ENCODE measurements at regions of chr4 and their contacts with region 1.

Region 1: GRCh38 chr4:118968005-118968404 is 79.4 kb downstream of the SYNPO2 start:
- DNase-seq: peak; percentile 21
- ATAC-seq: peak; percentile 93
- H3K4me3 Mint-ChIP-seq: no peak overlapping the region
- H3K27ac Mint-ChIP-seq: peak overlapping the region; percentile 17
- H3K4me1 Mint-ChIP-seq: peaks cover 25% of the 10 kb centered on the region
- H3K27me3 Mint-ChIP-seq: no peaks in the 10 kb centered on the region
- CTCF ChIP-seq: no peak

Region 2: GRCh38 chr4:118740869-118741268 is 227.1 kb before region 1 on chr4:
- CTCF ChIA-PET with region 1: interaction called, 10 read pairs
- POLR2A ChIA-PET with region 1: no interaction called
- DNase-seq: no peak
- ATAC-seq: no peak
- H3K4me3 Mint-ChIP-seq: no peak overlapping the region
- H3K27ac Mint-ChIP-seq: no peak overlapping the region
- H3K4me1 Mint-ChIP-seq: peaks cover 8% of the 10 kb centered on the region
- H3K27me3 Mint-ChIP-seq: no peaks in the 10 kb centered on the region
- CTCF ChIP-seq: peak; percentile 17; the same call in 1 of the 2 replicates

Region 3: GRCh38 chr4:118772081-118772766 is 195.8 kb before region 1 on chr4:
- CTCF ChIA-PET with region 1: interaction called, 13 read pairs
- POLR2A ChIA-PET with region 1: no interaction called
- DNase-seq: no peak
- ATAC-seq: peak; percentile 64
- H3K4me3 Mint-ChIP-seq: no peak overlapping the region
- H3K27ac Mint-ChIP-seq: no peak overlapping the region
- H3K4me1 Mint-ChIP-seq: peaks cover 25% of the 10 kb centered on the region
- H3K27me3 Mint-ChIP-seq: no peaks in the 10 kb centered on the region
- CTCF ChIP-seq: no peak; the same call in 1 of the 2 replicates

Measured in WTC11 (cell line).